Activated T-helper 1 cell treated with anti-CD3 and anti-CD28 coated beads, Interleukin-12 subunit alpha, Interleukin-12 subunit beta, Interleukin-2, Interleukin-4 antibody, amounts not matched to agents 30 ng/mL and 10 ng/mL and 1 ng/mL, durations not matched to agents 14 hours and 24 hours and 36 hours (primary cell): ENCODE measurements at regions of chr6 and their contacts with region 1.

Region 1: DNA sequence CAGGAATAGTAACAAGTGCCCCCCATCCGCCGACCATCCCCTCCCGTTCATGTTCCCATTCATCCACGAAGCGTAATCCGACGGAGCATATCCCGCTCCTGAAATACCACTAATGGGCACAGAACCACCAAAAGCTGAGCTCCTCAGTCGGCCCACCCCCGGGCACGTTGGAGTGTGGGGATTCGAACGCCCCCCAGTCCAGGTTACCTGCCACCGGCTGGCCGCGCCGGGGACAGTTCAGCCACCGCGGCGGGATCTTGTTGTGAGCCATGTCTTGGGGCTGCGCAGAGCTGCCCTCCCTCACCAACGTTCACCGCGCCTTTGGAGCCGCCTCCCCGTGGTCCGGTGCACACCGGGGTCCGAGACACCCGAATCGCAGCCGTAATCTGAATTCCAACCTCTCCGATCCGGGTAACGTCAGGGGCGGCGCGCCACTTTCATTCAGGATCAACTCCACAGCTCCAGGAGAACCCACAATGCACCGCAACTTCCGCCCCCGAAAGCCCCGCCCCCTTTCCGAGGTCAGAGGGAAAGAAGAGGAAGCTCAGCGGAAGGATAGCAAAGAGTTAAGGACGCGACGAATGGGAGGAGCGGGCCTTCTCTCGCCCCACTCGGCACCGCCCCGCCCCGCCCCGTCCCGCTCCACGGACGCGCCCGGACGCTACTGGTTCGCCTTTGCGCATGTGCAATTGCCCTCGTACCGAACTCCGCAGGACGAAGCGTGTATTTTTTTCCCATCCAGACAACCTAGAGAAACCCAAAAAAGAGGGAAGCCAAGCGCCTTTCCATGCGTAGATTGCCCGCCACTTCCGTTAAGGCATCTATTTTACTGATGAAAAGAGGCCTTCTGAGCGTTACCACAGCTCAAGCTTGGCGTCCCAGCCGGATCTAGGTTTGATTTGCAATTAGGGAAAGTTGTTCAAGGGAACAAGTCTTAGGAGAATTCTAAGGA is at the start of gene RNGTT:
- DNase-seq: peak; percentile 97
- H3K4me3 Mint-ChIP-seq: peak within 1 kb of the TSS; percentile 98
- H3K27ac Mint-ChIP-seq: peak within 1 kb of the TSS; percentile 84
- H3K4me1 Mint-ChIP-seq: peaks cover 33% of the 10 kb centered on the region
- H3K27me3 Mint-ChIP-seq: peaks cover 7% of the 10 kb centered on the region
- total RNA-seq, gene RNGTT: 21.6 and 25.3 TPM in 2 replicates

Region 2: GRCh38 chr6:87472525-87473418 is 1490.6 kb before region 1 on chr6 and contains the start of gene SLC35A1:
- intact Hi-C with region 1: loop called (anchors 5 kb)
- DNase-seq: peak; percentile 77
- H3K4me3 Mint-ChIP-seq: peak within 1 kb of the TSS; percentile 98
- H3K27ac Mint-ChIP-seq: peak within 1 kb of the TSS; percentile 97
- H3K4me1 Mint-ChIP-seq: peaks cover 14% of the 10 kb centered on the region
- H3K27me3 Mint-ChIP-seq: peaks cover 7% of the 10 kb centered on the region
- total RNA-seq, gene SLC35A1: 9.7 and 10.2 TPM in 2 replicates

Region 3: GRCh38 chr6:89145787-89146646 is 182.6 kb after region 1 on chr6 and contains the start of gene PM20D2:
- intact Hi-C with region 1: loop called (anchors 1 kb)
- DNase-seq: peak; percentile 59
- H3K4me3 Mint-ChIP-seq: peak within 1 kb of the TSS; percentile 93
- H3K27ac Mint-ChIP-seq: peak within 1 kb of the TSS; percentile 98
- H3K4me1 Mint-ChIP-seq: peaks cover 40% of the 10 kb centered on the region
- H3K27me3 Mint-ChIP-seq: peaks cover 11% of the 10 kb centered on the region
- total RNA-seq, gene PM20D2: 14.1 TPM in 2 replicates

Region 4: DNA sequence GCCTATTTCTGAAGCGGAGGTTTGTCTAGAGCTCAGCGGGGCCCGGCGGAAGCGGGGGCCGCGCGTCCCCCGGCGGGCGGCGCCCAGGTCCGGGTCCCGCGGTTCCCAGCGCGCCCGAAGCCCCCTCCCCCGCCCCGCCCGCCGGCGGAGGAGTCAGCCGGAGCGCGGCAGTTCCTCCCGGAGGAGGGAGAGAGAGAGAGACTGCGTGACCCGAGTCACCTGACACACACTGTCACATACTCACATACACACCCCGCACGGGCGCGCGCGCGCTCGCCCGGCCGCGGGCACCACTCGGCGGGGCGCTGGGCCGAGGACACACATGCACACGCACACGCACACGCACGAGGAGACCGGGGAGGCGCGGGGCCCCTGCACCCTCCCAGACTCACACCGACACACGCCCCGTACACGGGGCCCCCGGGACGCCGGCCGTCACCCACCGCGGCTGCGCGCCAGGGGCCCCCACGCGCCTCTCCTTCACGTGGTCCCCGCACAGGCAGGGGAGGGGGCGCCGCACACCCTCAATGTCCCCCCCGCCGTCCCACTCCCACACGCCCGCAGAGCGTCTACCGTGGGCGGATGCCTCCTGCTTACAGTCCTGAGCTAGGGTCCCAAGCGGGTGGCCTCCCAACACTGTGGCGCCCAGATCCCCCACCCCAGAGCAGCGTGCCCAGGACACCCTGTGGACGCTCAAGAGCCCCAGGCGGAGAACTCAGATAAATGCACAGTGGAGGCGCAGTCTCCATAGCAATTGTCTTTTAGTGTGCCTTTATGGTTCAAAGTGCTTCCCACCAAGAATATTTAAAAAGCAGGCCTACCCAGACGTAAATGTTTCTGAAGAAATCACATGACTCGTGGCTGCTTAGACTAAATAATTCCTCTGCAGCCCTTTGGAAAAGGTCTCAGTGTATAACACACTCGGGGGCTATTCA is 448.9 kb after region 1 on chr6 and contains the start of gene RRAGD:
- intact Hi-C with region 1: loop called (anchors 1 kb)
- DNase-seq: peak; percentile 49
- H3K4me3 Mint-ChIP-seq: peak within 1 kb of the TSS; percentile 95
- H3K27ac Mint-ChIP-seq: peak within 1 kb of the TSS; percentile 94
- H3K4me1 Mint-ChIP-seq: peaks cover 25% of the 10 kb centered on the region
- H3K27me3 Mint-ChIP-seq: peaks cover 50% of the 10 kb centered on the region
- total RNA-seq, gene RRAGD: 7.8 and 10.1 TPM in 2 replicates

Region 5: DNA sequence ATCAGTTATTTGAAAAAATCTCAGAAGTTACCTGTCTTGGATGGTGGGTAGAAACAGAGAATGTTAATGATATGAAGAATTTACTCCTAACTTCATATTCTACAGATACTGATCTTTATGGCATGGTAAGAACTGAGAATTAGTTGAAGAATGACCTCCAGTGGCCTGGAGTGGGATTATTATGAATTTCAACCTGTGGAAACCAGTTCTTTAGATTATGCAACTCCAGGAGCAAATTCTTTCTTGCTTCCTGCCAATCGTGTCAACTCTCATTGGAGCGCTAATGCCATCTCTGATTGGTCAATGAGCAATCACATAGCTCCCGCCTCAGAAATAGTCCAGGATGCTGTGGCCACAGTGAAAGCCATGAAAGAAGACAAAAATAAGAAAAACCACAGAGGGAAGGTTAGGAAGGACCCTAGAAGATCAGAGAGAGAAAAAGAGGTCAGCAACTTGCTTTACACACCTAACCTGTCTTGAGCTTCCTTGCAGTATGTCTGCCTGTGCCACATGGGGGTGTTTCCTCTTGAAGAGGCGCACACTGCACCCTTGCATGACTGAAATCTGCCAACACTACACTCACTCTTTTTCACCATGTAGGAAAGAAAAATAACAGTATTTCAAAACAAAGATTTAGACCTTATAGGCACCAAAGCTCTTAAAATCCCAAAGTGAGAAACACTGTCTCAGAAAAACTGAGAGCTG is 634.7 kb after region 1 on chr6:
- intact Hi-C with region 1: loop called (anchors 5 kb)
- DNase-seq: no peak
- H3K4me3 Mint-ChIP-seq: peak overlapping the region; percentile 12
- H3K27ac Mint-ChIP-seq: peak overlapping the region; percentile 75
- H3K4me1 Mint-ChIP-seq: peaks cover 45% of the 10 kb centered on the region
- H3K27me3 Mint-ChIP-seq: no peaks in the 10 kb centered on the region